Caco-2 (cell line): ENCODE measurements at regions of chr12 and their contacts with region 1.

Region 1: GRCh38 chr12:68358532-68359485 is 26.6 kb upstream of the MDM1 start:
- DNase-seq: peak; percentile 76 to 78
- H3K4me3 ChIP-seq: no peak overlapping the region
- H3K4me3 Mint-ChIP-seq: peak overlapping the region; percentile 49
- H3K27ac Mint-ChIP-seq: peak overlapping the region; percentile 55
- H3K4me1 ChIP-seq: peaks cover 16% of the 10 kb centered on the region
- H3K4me1 Mint-ChIP-seq: peaks cover 24% of the 10 kb centered on the region
- H3K27me3 ChIP-seq: no peaks in the 10 kb centered on the region
- H3K27me3 Mint-ChIP-seq: no peaks in the 10 kb centered on the region
- CTCF ChIP-seq: peak; percentile 62 to 66

Region 2: GRCh38 chr12:68331869-68332727 is 26.7 kb before region 1 on chr12 and contains the start of gene MDM1:
- CTCF ChIA-PET with region 1: no interaction called
- POLR2A ChIA-PET with region 1: no interaction called
- intact Hi-C with region 1: loop called (anchors 2 kb)
- DNase-seq: peak; percentile 97 to 98
- H3K4me3 ChIP-seq: peak within 1 kb of the TSS; percentile 71
- H3K4me3 Mint-ChIP-seq: peak within 1 kb of the TSS; percentile 79
- H3K27ac Mint-ChIP-seq: peak within 1 kb of the TSS; percentile 51
- H3K4me1 ChIP-seq: peaks cover 22% of the 10 kb centered on the region; the same call in 1 of the 2 replicates
- H3K4me1 Mint-ChIP-seq: peaks cover 8% of the 10 kb centered on the region
- H3K27me3 ChIP-seq: no peaks in the 10 kb centered on the region
- H3K27me3 Mint-ChIP-seq: no peaks in the 10 kb centered on the region
- CTCF ChIP-seq: no peak
- total RNA-seq, gene MDM1: 19.0 and 22.2 TPM in 2 replicates

Region 3: GRCh38 chr12:68428724-68429501 is 70.1 kb after region 1 on chr12:
- CTCF ChIA-PET with region 1: no interaction called
- POLR2A ChIA-PET with region 1: no interaction called
- intact Hi-C with region 1: loop called (anchors 1 kb)
- DNase-seq: peak; percentile 72 to 79
- H3K4me3 ChIP-seq: no peak overlapping the region
- H3K4me3 Mint-ChIP-seq: peak overlapping the region; percentile 45
- H3K27ac Mint-ChIP-seq: peak overlapping the region; percentile 94
- H3K4me1 ChIP-seq: peaks cover 54% of the 10 kb centered on the region
- H3K4me1 Mint-ChIP-seq: peaks cover 29% of the 10 kb centered on the region
- H3K27me3 ChIP-seq: no peaks in the 10 kb centered on the region
- H3K27me3 Mint-ChIP-seq: no peaks in the 10 kb centered on the region
- CTCF ChIP-seq: no peak

Region 4: DNA sequence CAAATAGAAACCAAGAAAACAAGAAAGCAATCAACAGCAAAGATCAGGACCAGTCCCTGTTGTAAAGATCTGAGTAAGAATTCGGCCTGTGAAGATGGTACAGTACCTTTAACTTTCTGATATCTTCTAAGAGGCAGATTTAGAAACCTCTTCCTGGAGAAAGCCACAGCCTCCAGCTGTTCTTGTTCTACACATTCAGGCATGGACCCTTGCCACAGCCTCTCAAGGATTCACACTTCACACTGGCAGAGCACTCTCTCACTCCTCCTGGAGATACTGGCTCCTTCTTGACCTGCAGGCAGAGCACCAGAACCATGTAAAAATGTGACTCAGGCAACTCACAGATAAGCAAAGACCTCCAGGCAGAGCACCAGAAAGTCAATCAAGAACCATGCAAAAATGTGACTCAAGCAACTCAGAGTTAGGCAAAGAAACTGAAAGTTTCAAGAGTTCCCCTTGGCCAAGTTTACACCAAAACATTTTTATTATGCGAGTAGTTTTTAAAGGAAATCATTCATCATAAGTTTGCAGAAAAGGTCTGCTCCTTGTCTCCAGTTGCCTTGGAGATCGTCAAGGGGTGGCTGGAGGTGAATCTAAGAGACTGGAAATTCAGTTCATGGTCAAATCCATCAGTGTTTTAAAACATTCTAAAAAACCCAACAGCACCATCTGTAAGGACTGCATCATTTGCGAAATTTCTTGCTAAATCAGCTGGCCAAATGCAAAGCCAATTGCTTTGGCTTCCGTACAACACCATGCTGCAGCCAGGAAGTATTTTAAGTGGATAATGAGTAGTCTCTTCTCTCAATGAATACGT is 92.7 kb after region 1 on chr12:
- CTCF ChIA-PET with region 1: no interaction called
- POLR2A ChIA-PET with region 1: no interaction called
- intact Hi-C with region 1: no loop called
- DNase-seq: no peak
- H3K4me3 ChIP-seq: no peak overlapping the region
- H3K4me3 Mint-ChIP-seq: no peak overlapping the region
- H3K27ac Mint-ChIP-seq: no peak overlapping the region
- H3K4me1 ChIP-seq: peaks cover 9% of the 10 kb centered on the region
- H3K4me1 Mint-ChIP-seq: peaks cover 19% of the 10 kb centered on the region
- H3K27me3 ChIP-seq: no peaks in the 10 kb centered on the region
- H3K27me3 Mint-ChIP-seq: no peaks in the 10 kb centered on the region
- CTCF ChIP-seq: no peak

Region 5: GRCh38 chr12:68559984-68560850 is 201.4 kb after region 1 on chr12:
- CTCF ChIA-PET with region 1: no interaction called
- POLR2A ChIA-PET with region 1: no interaction called
- intact Hi-C with region 1: loop called (anchors 2 kb)
- DNase-seq: no peak
- H3K4me3 ChIP-seq: no peak overlapping the region
- H3K4me3 Mint-ChIP-seq: no peak overlapping the region
- H3K27ac Mint-ChIP-seq: peak overlapping the region; percentile 55
- H3K4me1 ChIP-seq: 0 out of 2 replicates have a peak, but pooled peaks cover 2% of the 10 kb centered on the region
- H3K4me1 Mint-ChIP-seq: peaks cover 7% of the 10 kb centered on the region
- H3K27me3 ChIP-seq: no peaks in the 10 kb centered on the region; the same call in 1 of the 2 replicates
- H3K27me3 Mint-ChIP-seq: no peaks in the 10 kb centered on the region
- CTCF ChIP-seq: no peak

Region 6: GRCh38 chr12:68610370-68611093 is 251.7 kb after region 1 on chr12 and contains the start of gene RAP1B:
- CTCF ChIA-PET with region 1: no interaction called
- POLR2A ChIA-PET with region 1: interaction called, 5 read pairs
- intact Hi-C with region 1: loop called (anchors 2 kb)
- DNase-seq: peak; percentile 91
- H3K4me3 ChIP-seq: peak within 1 kb of the TSS; percentile 92
- H3K4me3 Mint-ChIP-seq: peak within 1 kb of the TSS; percentile 76
- H3K27ac Mint-ChIP-seq: peak within 1 kb of the TSS; percentile 91
- H3K4me1 ChIP-seq: peaks cover 50% of the 10 kb centered on the region
- H3K4me1 Mint-ChIP-seq: peaks cover 29% of the 10 kb centered on the region
- H3K27me3 ChIP-seq: no peaks in the 10 kb centered on the region
- H3K27me3 Mint-ChIP-seq: no peaks in the 10 kb centered on the region
- CTCF ChIP-seq: no peak
- total RNA-seq, gene RAP1B: 216 and 239 TPM in 2 replicates

Region 7: DNA sequence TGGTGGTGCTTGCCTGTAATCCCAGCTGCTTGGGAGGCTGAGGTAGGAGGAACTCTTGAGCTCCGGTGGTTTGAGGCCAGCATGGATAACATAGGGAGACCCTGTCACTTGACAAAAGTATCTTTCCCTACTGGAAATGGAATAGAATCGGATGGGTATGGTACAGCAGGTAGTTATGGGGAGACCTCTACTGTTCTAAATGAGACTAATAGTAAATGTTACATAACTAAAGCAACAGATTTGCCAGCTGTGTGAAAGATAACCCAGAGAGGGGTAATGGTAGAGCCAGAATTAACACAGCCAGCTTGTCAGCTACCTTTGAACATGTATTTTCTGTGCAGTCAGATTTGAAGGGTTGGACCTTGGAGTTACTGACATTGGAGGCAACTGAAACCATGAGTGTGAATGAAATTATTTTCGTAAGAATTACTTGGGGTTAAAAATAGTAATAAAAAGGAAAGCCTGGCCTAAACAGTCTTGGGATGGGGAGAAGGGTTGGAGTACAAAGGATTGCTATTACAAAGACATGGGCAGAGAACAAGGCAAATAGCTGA is 306.3 kb after region 1 on chr12:
- CTCF ChIA-PET with region 1: no interaction called
- POLR2A ChIA-PET with region 1: no interaction called
- intact Hi-C with region 1: loop called (anchors 2 kb)
- DNase-seq: peak in 1 of 2 experiments; percentile 8
- H3K4me3 ChIP-seq: no peak overlapping the region
- H3K4me3 Mint-ChIP-seq: no peak overlapping the region
- H3K27ac Mint-ChIP-seq: no peak overlapping the region
- H3K4me1 ChIP-seq: no peaks in the 10 kb centered on the region
- H3K4me1 Mint-ChIP-seq: peaks cover 6% of the 10 kb centered on the region
- H3K27me3 ChIP-seq: no peaks in the 10 kb centered on the region
- H3K27me3 Mint-ChIP-seq: no peaks in the 10 kb centered on the region
- CTCF ChIP-seq: peak in 1 of 2 experiments; percentile 3

Region 8: GRCh38 chr12:68686595-68687521 is 328.0 kb after region 1 on chr12 and contains the start of gene NUP107:
- CTCF ChIA-PET with region 1: no interaction called
- POLR2A ChIA-PET with region 1: no interaction called
- intact Hi-C with region 1: loop called (anchors 2 kb)
- DNase-seq: peak; percentile 99
- H3K4me3 ChIP-seq: peak within 1 kb of the TSS; percentile 88
- H3K4me3 Mint-ChIP-seq: peak within 1 kb of the TSS; percentile 91
- H3K27ac Mint-ChIP-seq: peak within 1 kb of the TSS; percentile 92
- H3K4me1 ChIP-seq: peaks cover 9% of the 10 kb centered on the region; the same call in 1 of the 2 replicates
- H3K4me1 Mint-ChIP-seq: peaks cover 12% of the 10 kb centered on the region
- H3K27me3 ChIP-seq: no peaks in the 10 kb centered on the region
- H3K27me3 Mint-ChIP-seq: no peaks in the 10 kb centered on the region
- CTCF ChIP-seq: no peak
- total RNA-seq, gene NUP107: 119 and 125 TPM in 2 replicates